MCF 10A (cell line): ENCODE measurements at regions of chr17 and their contacts with region 1.

Region 1: GRCh38 chr17:60514053-60514452 is 12.0 kb downstream of the APPBP2 start:
- DNase-seq: no peak
- H3K4me3 Mint-ChIP-seq: no peak overlapping the region
- H3K27ac Mint-ChIP-seq: peak overlapping the region; percentile 66
- H3K4me1 Mint-ChIP-seq: peaks cover 7% of the 10 kb centered on the region
- H3K27me3 Mint-ChIP-seq: no peaks in the 10 kb centered on the region
- CTCF ChIP-seq: no peak

Region 2: DNA sequence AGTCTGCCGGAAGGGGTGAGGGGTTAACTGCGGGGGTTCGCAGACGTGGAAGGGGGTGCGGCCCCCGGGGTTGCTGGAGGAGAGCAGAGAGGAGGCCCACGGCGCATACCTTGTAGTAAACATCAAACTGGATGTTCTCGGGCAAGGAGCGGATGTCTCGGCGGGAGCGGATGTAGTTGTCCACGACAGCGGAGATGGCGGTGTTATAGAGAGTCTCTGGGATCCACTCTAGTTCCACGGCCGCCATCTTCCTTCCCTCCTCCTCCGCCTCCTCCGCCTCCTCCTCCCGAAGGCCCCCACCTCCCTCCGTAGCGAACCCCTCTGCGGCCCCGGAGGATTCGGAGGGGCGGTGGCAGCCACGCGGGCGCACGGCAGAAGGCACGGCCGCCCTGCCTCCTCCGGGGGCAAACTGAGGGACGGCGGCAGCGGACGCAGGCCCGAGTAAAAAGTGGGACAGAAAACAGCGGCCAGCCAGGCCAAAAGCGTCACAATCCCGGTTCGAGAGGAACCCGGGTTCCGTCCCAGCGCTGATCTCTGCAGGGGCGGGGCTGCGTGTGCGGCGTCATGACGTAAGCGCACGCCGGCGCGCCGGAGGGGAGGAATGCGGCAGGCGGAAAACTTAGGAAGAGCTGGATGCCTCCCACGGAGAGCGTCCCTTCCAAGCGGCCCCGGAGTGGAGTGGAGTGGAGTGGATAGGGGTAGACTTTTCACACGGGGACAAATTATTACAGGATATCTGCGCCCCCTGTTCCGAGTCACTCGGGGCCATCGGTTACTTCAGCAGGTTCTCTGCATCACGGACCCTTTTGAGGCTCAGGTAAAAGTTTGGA is 11.8 kb after region 1 on chr17 and contains the start of gene APPBP2:
- CTCF ChIA-PET with region 1: no interaction called
- POLR2A ChIA-PET with region 1: interaction called, 10 read pairs
- intact Hi-C with region 1: no loop called
- DNase-seq: peak; percentile 85
- H3K4me3 Mint-ChIP-seq: peak within 1 kb of the TSS; percentile 91
- H3K27ac Mint-ChIP-seq: peak within 1 kb of the TSS; percentile 98
- H3K4me1 Mint-ChIP-seq: peaks cover 30% of the 10 kb centered on the region
- H3K27me3 Mint-ChIP-seq: no peaks in the 10 kb centered on the region
- CTCF ChIP-seq: no peak
- total RNA-seq, gene APPBP2: 33.1 and 39.6 TPM in 2 replicates